Posterior vena cava (tissue), 2 donors: ENCODE measurements at regions of chr6 and their contacts with region 1.

Region 1: DNA sequence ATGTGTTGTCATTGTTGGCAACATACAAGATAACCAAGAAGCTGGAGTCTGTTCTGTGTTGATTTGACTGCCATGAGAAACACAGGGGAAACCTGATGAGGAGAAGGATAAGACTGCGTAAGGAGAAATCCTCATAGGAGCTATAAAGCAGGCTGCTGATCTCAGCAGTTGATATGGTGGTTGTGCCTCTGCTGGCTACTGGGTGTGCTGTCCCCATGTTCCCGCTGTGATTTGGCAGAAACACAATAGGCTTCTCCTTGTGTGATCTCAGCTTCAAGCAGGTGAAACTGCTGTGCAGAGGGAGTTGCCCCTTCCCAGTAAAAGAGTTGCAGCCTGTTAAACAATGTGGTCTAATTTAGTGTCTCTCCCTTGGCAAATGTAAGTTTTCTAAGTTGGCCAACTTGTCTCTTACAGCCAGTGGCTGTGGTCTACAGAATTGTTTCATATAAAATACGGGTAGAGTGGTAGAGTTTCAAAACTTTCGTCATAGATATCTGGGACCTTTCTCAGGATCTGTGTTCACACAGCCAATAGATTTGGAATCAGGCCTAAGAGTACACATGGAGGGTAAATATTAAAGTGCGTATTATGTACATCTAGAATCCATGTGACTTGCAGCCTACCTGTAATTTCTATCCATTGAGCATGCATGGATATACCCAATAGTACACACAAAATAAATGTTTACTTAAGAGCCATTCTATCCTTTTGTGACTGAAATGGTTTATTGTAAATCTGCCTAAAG is 78.4 kb downstream of the RNF144B start:
- DNase-seq: no peak

Region 2: DNA sequence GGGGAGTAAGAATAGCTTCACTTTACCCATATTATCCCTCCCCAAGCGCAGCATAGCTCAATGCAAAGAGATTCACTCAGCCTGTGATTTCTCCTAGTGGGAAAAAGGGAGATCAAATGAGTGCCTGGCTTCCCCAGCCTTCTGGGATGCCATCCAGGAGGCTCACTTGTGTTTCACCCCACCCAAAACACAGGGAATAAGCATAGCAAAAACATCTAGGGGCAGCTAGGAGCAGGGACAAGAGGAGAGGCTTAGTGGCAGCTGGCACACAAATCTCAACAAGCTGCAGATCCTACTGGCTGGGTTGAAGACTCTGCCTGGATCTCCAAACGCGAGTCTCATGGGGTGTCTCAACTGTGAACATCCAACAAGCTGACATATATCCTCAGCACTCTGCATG is 637.4 kb after region 1 on chr6:
- intact Hi-C with region 1: no loop called
- DNase-seq: no peak

Region 3: GRCh38 chr6:20427856-20428255 is 1962.3 kb after region 1 on chr6:
- intact Hi-C with region 1: loop called in 1 of 2 experiments (anchors 10 kb)
- DNase-seq: no peak